A549 (cell line): ENCODE measurements at regions of chr7 and their contacts with region 1.

Region 1: GRCh38 chr7:1593091-1593866 is 23.4 kb upstream of the PSMG3 start:
- DNase-seq: peak; percentile 36 to 38
- ATAC-seq: peak; percentile 64 to 90
- H3K4me3 ChIP-seq: no peak overlapping the region
- H3K27ac ChIP-seq: no peak overlapping the region
- H3K4me1 ChIP-seq: no peaks in the 10 kb centered on the region
- CTCF ChIP-seq: peak; percentile 34
- EP300 ChIP-seq: no peak
- POLR2A ChIP-seq: no peak
- RAD21 ChIP-seq: peak in 1 of 2 experiments; percentile 19; a peak in 1 of 5 replicates

Region 2: DNA sequence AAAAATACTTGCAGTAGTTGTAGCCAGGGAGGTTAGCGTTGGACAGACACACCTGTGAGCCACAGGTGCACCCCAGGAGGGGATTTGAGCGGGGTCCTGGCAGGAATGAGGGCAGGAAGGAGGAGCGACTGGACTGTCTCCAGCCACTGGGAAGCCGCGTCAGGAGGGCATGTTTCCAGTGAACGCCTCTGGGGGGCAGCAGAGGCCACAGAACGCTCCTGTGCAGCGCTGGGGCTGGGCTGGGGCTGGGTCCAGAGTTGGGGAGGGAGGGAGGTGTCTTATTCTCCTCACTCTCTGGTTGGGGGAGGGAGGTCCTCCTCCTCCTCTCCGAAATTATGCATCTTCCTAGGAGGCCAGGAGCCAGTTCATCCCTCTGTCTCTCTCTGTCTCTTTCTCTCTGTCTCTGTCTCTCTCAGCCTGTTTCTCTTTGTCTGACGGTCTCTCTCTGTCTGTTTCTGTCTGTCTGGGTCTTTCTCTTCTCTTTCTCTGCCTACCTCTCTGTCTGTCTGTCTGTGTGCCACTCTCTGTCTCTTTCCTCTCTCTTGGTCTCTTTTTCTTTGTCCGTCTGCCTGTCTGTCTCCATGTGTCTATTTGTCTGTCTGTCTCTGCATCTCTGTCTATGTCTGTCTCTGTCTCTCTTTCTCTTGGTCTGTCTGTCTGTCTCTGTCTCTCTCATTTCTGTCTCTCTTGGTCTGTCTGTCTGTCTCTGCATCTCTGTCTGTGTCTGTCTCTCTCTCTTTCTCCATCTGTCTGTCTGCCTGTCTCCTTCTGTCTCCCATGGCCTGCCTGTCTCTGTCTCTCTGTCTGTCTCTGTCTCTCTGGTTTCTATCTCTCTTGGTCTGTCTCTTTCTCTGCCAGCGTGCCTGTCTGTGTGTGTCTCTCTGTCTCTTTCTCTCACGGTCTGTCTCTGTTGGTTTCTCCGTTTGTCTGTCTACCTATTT is 13.5 kb before region 1 on chr7:
- CTCF ChIA-PET with region 1: interaction called, 23 read pairs
- POLR2A ChIA-PET with region 1: no interaction called
- DNase-seq: peak; percentile 64 to 74
- ATAC-seq: peak; percentile 93 to 98
- H3K4me3 ChIP-seq: no peak overlapping the region
- H3K27ac ChIP-seq: no peak overlapping the region
- H3K4me1 ChIP-seq: no peaks in the 10 kb centered on the region
- CTCF ChIP-seq: peak; percentile 89
- EP300 ChIP-seq: no peak
- POLR2A ChIP-seq: no peak
- RAD21 ChIP-seq: peak; percentile 95 to 97